Activated B cell treated with CpG ODN at 0.5 μM for 24 hours (primary cell): ENCODE measurements at regions of chr22 and their contacts with region 1.

Region 1: GRCh38 chr22:22099833-22100812 is 117.5 kb upstream of the TOP3B start:
- DNase-seq: no peak
- ATAC-seq: peak; percentile 19
- H3K4me3 Mint-ChIP-seq: no peak overlapping the region
- H3K27ac Mint-ChIP-seq: peak overlapping the region; percentile 92
- H3K4me1 Mint-ChIP-seq: peaks cover 52% of the 10 kb centered on the region
- H3K27me3 Mint-ChIP-seq: no peaks in the 10 kb centered on the region
- CTCF ChIP-seq: no peak

Region 2: GRCh38 chr22:22043296-22044078 is 56.6 kb before region 1 on chr22:
- CTCF ChIA-PET with region 1: interaction called, 5 read pairs
- POLR2A ChIA-PET with region 1: interaction called, 16 read pairs
- intact Hi-C with region 1: no loop called
- DNase-seq: no peak
- ATAC-seq: peak; percentile 73
- H3K4me3 Mint-ChIP-seq: peak overlapping the region; percentile 82
- H3K27ac Mint-ChIP-seq: peak overlapping the region; percentile 82
- H3K4me1 Mint-ChIP-seq: peaks cover 73% of the 10 kb centered on the region
- H3K27me3 Mint-ChIP-seq: no peaks in the 10 kb centered on the region
- CTCF ChIP-seq: no peak

Region 3: DNA sequence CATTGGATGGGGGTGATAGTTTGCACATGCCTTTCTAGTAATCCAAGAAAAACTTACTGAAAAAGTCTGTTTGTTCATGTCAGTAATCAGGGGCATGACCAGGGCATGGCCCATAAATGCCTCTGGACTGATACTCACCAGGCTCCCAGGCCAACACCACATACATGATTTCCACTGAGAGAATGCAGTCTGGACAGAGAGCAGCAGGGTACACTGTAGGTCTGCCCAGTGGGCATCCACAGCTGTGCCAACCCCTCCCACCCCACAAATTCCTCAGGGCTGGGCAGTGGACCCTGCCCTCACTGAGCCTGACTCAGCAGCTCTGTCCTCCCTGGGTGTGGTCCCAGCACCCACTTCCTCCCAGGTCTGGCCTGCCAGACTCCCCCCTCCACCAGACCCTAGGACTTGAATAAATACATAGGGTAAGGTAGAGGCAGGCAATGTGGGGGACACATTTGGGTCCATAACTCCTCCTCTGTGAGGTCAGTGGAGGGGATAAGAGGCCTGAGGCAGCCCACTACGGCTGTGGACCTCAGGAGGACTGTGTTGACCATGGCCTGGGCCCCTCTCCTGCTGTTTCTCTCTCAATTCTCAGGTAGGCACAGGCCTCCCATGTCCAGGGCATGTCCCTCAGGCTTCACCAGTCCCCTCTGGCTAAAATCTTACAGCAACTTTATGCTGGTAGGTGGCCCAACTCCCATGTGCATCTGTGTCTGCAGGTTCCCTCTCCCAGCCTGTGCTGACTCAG is 25.3 kb before region 1 on chr22:
- CTCF ChIA-PET with region 1: no interaction called
- POLR2A ChIA-PET with region 1: no interaction called
- intact Hi-C with region 1: no loop called
- DNase-seq: no peak
- ATAC-seq: no peak
- H3K4me3 Mint-ChIP-seq: no peak overlapping the region
- H3K27ac Mint-ChIP-seq: no peak overlapping the region
- H3K4me1 Mint-ChIP-seq: peaks cover 8% of the 10 kb centered on the region
- H3K27me3 Mint-ChIP-seq: no peaks in the 10 kb centered on the region
- CTCF ChIP-seq: no peak

Region 4: GRCh38 chr22:22085702-22086500 is 14.2 kb before region 1 on chr22:
- CTCF ChIA-PET with region 1: interaction called, 4 read pairs
- POLR2A ChIA-PET with region 1: no interaction called
- intact Hi-C with region 1: loop called (anchors 1 kb)
- DNase-seq: no peak
- ATAC-seq: no peak
- H3K4me3 Mint-ChIP-seq: no peak overlapping the region
- H3K27ac Mint-ChIP-seq: no peak overlapping the region
- H3K4me1 Mint-ChIP-seq: peaks cover 5% of the 10 kb centered on the region
- H3K27me3 Mint-ChIP-seq: no peaks in the 10 kb centered on the region
- CTCF ChIP-seq: no peak

Region 5: GRCh38 chr22:22118987-22119386 is 18.9 kb after region 1 on chr22:
- CTCF ChIA-PET with region 1: interaction called, 3 read pairs
- POLR2A ChIA-PET with region 1: interaction called, 11 read pairs
- intact Hi-C with region 1: no loop called
- DNase-seq: no peak
- ATAC-seq: no peak
- H3K4me3 Mint-ChIP-seq: peak overlapping the region; percentile 50
- H3K27ac Mint-ChIP-seq: peak overlapping the region; percentile 94
- H3K4me1 Mint-ChIP-seq: peaks cover 29% of the 10 kb centered on the region
- H3K27me3 Mint-ChIP-seq: no peaks in the 10 kb centered on the region
- CTCF ChIP-seq: no peak

Region 6: GRCh38 chr22:22235558-22235957 is 135.4 kb after region 1 on chr22:
- CTCF ChIA-PET with region 1: interaction called, 11 read pairs
- POLR2A ChIA-PET with region 1: no interaction called
- intact Hi-C with region 1: no loop called
- DNase-seq: no peak
- ATAC-seq: no peak
- H3K4me3 Mint-ChIP-seq: peak overlapping the region; percentile 38
- H3K27ac Mint-ChIP-seq: no peak overlapping the region
- H3K4me1 Mint-ChIP-seq: peaks cover 25% of the 10 kb centered on the region
- H3K27me3 Mint-ChIP-seq: peaks cover 2% of the 10 kb centered on the region
- CTCF ChIP-seq: no peak